ENCODE measurements at regions of chr3 and their contacts with region 1.

Region 1: DNA sequence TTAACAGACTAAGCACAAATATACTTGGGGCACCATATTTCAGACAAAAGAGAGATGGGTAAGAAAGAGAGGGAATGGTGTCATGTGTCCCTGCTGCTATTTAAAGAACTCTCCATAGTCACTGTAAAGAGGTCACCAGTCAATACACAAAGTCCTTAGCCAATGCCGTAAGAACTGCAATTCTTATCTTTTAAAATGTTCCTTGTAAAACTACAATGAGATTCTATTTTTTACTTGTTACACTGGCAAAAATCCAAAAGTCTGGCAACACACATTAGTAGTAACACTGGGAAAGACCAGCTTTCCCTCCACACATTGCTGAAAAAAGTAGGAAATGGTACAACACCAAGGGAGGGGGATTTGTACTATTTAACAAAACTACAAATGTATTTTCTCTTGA is 189.4 kb downstream of the TBC1D5 start:
- DNase-seq: no peak
- ATAC-seq: peak; percentile 61 to 98 (median 96)
- H3K4me3 ChIP-seq: no peak overlapping the region
- H3K27ac ChIP-seq: peak overlapping the region in 9 of 10 donors; percentile 36 to 79 (median 68)
- H3K4me1 ChIP-seq: peaks cover 0 to 37% (median 22%) of the 10 kb centered on the region in 9 donors
- H3K27me3 ChIP-seq: no peaks in the 10 kb centered on the region
- CTCF ChIP-seq: no peak

Region 2: DNA sequence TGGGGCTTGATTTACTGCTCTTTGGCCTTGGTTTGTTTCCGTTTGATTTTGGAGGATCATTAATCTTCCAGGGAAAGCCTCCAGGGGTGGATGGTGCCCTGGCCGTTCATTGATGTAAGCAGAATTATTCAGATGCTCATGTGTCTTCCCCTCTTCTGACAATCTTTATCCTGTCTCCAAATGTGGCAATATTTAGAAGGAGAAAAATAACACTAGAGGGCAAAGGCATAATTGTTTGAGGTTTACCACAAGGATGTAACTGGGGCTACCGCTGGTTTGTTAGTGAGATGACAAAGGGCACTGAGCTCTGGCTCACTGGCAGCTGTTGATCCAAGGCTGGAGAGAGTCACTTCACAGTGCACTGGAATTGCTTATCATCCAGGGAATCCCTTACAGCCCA is 686.5 kb before region 1 on chr3:
- intact Hi-C with region 1: no loop called
- DNase-seq: no peak
- ATAC-seq: no peak
- H3K4me3 ChIP-seq: no peak overlapping the region
- H3K27ac ChIP-seq: no peak overlapping the region
- H3K4me1 ChIP-seq: peaks cover 0 to 36% (median 0%) of the 10 kb centered on the region in 9 donors
- H3K27me3 ChIP-seq: no peaks in the 10 kb centered on the region
- CTCF ChIP-seq: no peak

Region 3: GRCh38 chr3:17481116-17481515 is 72.0 kb before region 1 on chr3:
- intact Hi-C with region 1: loop called in 1 of 10 experiments (anchors 5 kb)
- DNase-seq: peak; percentile 41 to 68
- ATAC-seq: peak; percentile 63 to 99 (median 92)
- H3K4me3 ChIP-seq: no peak overlapping the region
- H3K27ac ChIP-seq: no peak overlapping the region
- H3K4me1 ChIP-seq: no peaks in the 10 kb centered on the region
- H3K27me3 ChIP-seq: no peaks in the 10 kb centered on the region
- CTCF ChIP-seq: no peak

Measured in heart right ventricle (tissue), 16 donors.